A549 (cell line): ENCODE measurements at regions of chr4 and their contacts with region 1.

Region 1: DNA sequence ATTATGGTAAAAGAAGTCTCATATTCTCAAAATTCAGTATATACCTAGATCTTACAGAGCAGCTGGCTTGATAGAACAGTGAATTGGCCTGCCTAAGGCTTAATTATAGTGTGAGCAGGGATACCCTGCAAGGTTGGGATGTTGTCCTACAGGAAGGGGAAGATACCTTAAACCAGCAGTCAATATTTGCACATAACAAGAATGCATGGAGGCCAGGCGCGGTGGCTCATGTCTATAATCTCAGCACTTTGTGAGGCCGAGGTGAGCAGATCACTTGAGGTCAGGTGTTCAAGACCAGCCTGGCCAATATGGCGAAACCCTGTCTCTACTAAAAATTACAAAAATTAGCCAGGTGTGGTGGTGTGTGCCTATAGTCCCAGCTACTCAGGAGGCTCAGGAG is 58.7 kb upstream of the ABCG2 start:
- DNase-seq: no peak
- ATAC-seq: no peak
- H3K4me3 ChIP-seq: no peak overlapping the region
- H3K27ac ChIP-seq: no peak overlapping the region
- H3K4me1 ChIP-seq: no peaks in the 10 kb centered on the region
- CTCF ChIP-seq: no peak
- EP300 ChIP-seq: no peak
- POLR2A ChIP-seq: no peak
- RAD21 ChIP-seq: no peak

Region 2: DNA sequence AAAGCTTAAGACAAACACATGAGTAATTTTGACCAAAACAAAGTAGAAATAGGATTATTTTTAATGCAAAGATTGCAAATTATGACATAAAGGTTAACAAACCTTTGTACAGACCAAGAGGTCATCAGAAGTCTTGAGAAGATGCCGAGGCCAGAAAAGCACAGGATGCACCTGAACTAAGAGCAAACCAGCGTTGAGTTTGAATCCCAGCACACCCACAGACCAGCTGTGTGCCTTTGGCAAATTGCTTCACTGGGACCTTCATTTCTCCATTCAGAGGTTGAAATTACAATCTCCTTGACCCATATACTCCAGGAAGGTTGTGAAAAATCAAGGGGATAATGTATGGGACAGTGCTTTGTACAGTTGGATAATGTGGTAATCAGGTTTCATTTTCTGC is 10.6 kb after region 1 on chr4:
- CTCF ChIA-PET with region 1: interaction called, 16 read pairs
- POLR2A ChIA-PET with region 1: no interaction called
- DNase-seq: no peak
- ATAC-seq: no peak
- H3K4me3 ChIP-seq: no peak overlapping the region
- H3K27ac ChIP-seq: no peak overlapping the region
- H3K4me1 ChIP-seq: no peaks in the 10 kb centered on the region
- CTCF ChIP-seq: no peak
- EP300 ChIP-seq: no peak
- POLR2A ChIP-seq: no peak
- RAD21 ChIP-seq: no peak

Region 3: GRCh38 chr4:88280228-88280795 is 63.1 kb after region 1 on chr4:
- CTCF ChIA-PET with region 1: no interaction called
- POLR2A ChIA-PET with region 1: no interaction called
- DNase-seq: no peak
- ATAC-seq: no peak
- H3K4me3 ChIP-seq: no peak overlapping the region
- H3K27ac ChIP-seq: no peak overlapping the region
- H3K4me1 ChIP-seq: peaks cover 13% of the 10 kb centered on the region
- CTCF ChIP-seq: no peak
- EP300 ChIP-seq: no peak
- POLR2A ChIP-seq: no peak
- RAD21 ChIP-seq: no peak

Region 4: DNA sequence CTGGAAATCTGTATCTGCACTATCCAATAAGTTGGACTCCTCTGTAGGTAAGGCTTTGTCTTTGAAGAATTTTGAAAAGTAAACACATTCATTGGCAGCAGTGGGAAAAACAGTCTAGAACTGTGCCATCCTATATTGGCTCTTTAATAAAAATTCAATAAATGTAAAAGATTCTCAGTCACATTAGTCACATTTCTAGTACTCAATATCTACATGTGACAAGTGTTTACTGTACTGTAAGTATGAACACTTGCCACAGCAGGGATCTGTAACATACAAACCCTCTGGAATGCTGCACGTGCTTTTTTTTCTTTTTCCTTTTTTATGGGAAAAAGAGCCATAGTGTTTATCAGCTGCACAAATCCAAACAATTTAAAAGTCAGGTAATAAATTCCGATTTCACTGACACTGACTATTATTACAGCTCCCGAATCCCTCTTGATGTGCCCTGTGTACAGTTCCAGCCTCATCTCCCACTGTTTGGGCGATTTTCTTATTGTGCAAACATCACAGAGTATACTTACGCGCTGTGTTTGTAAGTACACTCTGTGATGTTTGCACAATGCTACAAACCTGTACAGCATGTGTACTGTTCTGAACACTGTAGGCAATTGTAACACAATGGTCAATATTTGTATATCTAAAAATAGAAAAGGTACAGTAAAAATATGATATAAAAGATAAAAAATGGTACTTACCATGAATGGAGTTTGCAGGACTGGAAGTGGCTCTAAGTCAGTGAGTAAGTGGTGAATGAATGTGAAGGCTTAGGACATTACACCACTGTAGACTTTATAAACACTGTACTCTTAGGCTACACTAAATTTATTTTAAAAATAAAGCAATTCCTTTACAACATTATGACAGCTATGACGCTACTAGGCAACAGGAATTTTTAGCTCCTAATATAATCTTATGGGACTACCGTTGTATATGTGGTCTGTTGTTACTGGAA is 297.7 kb after region 1 on chr4:
- CTCF ChIA-PET with region 1: interaction called, 182 read pairs
- POLR2A ChIA-PET with region 1: interaction called, 3 read pairs
- DNase-seq: no peak
- ATAC-seq: 0 out of 6 replicates have a peak, but pooled peaks of 1 of the 2 experiments have one; percentile 27
- H3K4me3 ChIP-seq: no peak overlapping the region
- H3K27ac ChIP-seq: no peak overlapping the region; a peak in 1 of 6 replicates
- H3K4me1 ChIP-seq: peaks cover 5% of the 10 kb centered on the region; the same call in 1 of the 3 replicates
- CTCF ChIP-seq: no peak
- EP300 ChIP-seq: no peak
- POLR2A ChIP-seq: no peak
- RAD21 ChIP-seq: no peak